ENCODE measurements at regions of chr11 and their contacts with region 1.

Region 1: DNA sequence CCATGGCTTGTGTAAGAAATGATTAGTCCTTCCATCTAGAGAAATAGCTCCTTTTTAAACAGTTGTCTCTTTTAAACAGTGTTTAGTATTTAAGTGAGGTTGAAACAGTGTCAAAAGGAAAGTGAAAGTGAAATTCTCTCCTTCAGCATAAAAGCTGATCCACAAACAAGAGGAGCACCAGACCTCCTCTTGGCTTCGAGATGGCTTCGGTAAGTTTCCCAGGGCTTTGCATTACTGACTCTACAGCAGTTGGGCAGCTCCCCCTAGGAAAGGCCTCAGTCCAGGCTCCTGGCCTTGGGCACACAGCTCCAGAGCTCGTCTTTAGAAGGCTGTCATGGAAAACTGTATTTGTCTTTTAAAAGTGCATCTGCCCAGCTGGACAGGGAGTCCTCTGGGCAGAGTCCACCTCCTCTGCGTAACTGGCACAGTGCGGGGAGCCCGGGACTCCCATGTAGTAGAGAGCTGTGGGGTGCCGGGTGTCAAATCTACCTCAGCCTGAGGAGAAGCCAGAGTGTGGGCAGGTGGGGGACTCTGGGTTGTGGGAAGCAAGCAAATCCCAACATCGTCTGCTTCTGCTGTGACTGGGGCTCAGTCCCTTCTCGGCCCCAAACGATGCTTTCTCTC is at the start of gene PLAAT4:
- DNase-seq: peak in 8 of 9 donors; percentile 30 to 64 (median 56)
- ATAC-seq: peak; percentile 74
- H3K4me3 ChIP-seq: peak within 1 kb of the TSS; percentile 90
- H3K4me3 Mint-ChIP-seq: peak within 1 kb of the TSS; percentile 87 to 99 (median 96)
- H3K27ac ChIP-seq: peak within 1 kb of the TSS; percentile 82
- H3K27ac Mint-ChIP-seq: peak within 1 kb of the TSS; percentile 91 to 97 (median 96)
- H3K4me1 ChIP-seq: peaks cover 79% of the 10 kb centered on the region in 2 donors
- H3K4me1 Mint-ChIP-seq: peaks cover 55 to 96% (median 87%) of the 10 kb centered on the region in 7 donors
- H3K27me3 ChIP-seq: no peaks in the 10 kb centered on the region
- H3K27me3 Mint-ChIP-seq: no peaks in the 10 kb centered on the region
- total RNA-seq, gene PLAAT4: 96.2 to 170 (median 122) TPM

Region 2: GRCh38 chr11:63490551-63491239 is 46.1 kb before region 1 on chr11 and contains the start of gene PLAAT5:
- CTCF ChIA-PET with region 1: no interaction called
- POLR2A ChIA-PET with region 1: interaction called, 19 read pairs
- intact Hi-C with region 1: no loop called
- DNase-seq: peak in 2 of 9 donors; percentile 8 to 15
- ATAC-seq: peak; percentile 73
- H3K4me3 ChIP-seq: peak within 1 kb of the TSS; percentile 41
- H3K4me3 Mint-ChIP-seq: peak within 1 kb of the TSS; percentile 77 to 88 (median 84)
- H3K27ac ChIP-seq: no peak within 1 kb of the TSS
- H3K27ac Mint-ChIP-seq: peak within 1 kb of the TSS in 1 of 9 donors; percentile 64
- H3K4me1 ChIP-seq: no peaks in the 10 kb centered on the region
- H3K4me1 Mint-ChIP-seq: peaks cover 8 to 19% (median 13%) of the 10 kb centered on the region in 7 donors
- H3K27me3 ChIP-seq: no peaks in the 10 kb centered on the region
- H3K27me3 Mint-ChIP-seq: peaks cover 25 to 80% (median 25%) of the 10 kb centered on the region in 5 donors
- total RNA-seq, gene PLAAT5: 1.1 TPM in 1 of 5 experiments, not detected in the others

Region 3: DNA sequence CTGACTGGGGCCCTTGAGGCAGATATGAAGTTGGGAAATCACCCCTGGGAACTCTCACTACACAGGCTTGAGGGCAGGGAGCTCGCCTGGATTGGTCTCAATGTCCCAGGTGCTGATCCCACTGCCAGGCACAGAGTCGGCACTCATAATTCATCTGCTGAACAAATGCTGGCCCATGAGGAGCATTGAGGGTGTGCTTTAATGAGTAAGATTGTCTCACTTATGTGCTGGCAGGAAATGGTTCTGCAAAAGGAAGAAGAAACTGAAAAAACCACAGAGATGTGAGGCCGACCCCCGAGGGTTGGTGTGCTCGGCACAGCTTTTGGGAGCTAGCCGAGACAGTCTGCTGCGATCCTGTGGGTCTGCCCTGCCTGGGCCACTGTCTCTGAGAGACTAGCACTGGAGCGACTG is 17.0 kb after region 1 on chr11:
- CTCF ChIA-PET with region 1: interaction called, 25 read pairs
- POLR2A ChIA-PET with region 1: interaction called, 172 read pairs
- intact Hi-C with region 1: loop called (anchors 1 kb)
- DNase-seq: peak in 7 of 9 donors; percentile 41 to 61 (median 53)
- ATAC-seq: peak; percentile 85
- H3K4me3 ChIP-seq: peak overlapping the region; percentile 51
- H3K4me3 Mint-ChIP-seq: peak overlapping the region; percentile 78 to 95 (median 88)
- H3K27ac ChIP-seq: peak overlapping the region; percentile 54
- H3K27ac Mint-ChIP-seq: peak overlapping the region; percentile 88 to 100 (median 96)
- H3K4me1 ChIP-seq: peaks cover 35 to 51% of the 10 kb centered on the region in 2 donors
- H3K4me1 Mint-ChIP-seq: peaks cover 33 to 81% (median 77%) of the 10 kb centered on the region in 7 donors
- H3K27me3 ChIP-seq: no peaks in the 10 kb centered on the region
- H3K27me3 Mint-ChIP-seq: no peaks in the 10 kb centered on the region

Region 4: GRCh38 chr11:63567044-63567840 is 30.5 kb after region 1 on chr11:
- CTCF ChIA-PET with region 1: no interaction called
- POLR2A ChIA-PET with region 1: interaction called, 5 read pairs
- intact Hi-C with region 1: loop called in 1 of 2 experiments (anchors 1 kb)
- DNase-seq: peak in 8 of 9 donors; percentile 31 to 84 (median 62)
- ATAC-seq: peak; percentile 88
- H3K4me3 ChIP-seq: no peak overlapping the region
- H3K4me3 Mint-ChIP-seq: peak overlapping the region in 9 of 10 donors; percentile 7 to 62 (median 42)
- H3K27ac ChIP-seq: peak overlapping the region; percentile 44
- H3K27ac Mint-ChIP-seq: peak overlapping the region; percentile 56 to 94 (median 86)
- H3K4me1 ChIP-seq: peaks cover 22 to 25% of the 10 kb centered on the region in 2 donors
- H3K4me1 Mint-ChIP-seq: peaks cover 26 to 55% (median 47%) of the 10 kb centered on the region in 7 donors
- H3K27me3 ChIP-seq: no peaks in the 10 kb centered on the region
- H3K27me3 Mint-ChIP-seq: peaks cover 0 to 19% (median 0%) of the 10 kb centered on the region in 5 donors

Region 5: GRCh38 chr11:63614136-63614664 is 77.4 kb after region 1 on chr11 and contains the start of gene PLAAT3:
- CTCF ChIA-PET with region 1: interaction called, 3 read pairs
- POLR2A ChIA-PET with region 1: interaction called, 3 read pairs
- intact Hi-C with region 1: loop called (anchors 2 to 5 kb)
- DNase-seq: peak in 7 of 9 donors; percentile 11 to 41 (median 16)
- ATAC-seq: peak; percentile 70
- H3K4me3 ChIP-seq: peak within 1 kb of the TSS; percentile 75
- H3K4me3 Mint-ChIP-seq: peak within 1 kb of the TSS; percentile 82 to 89 (median 86)
- H3K27ac ChIP-seq: peak within 1 kb of the TSS; percentile 35
- H3K27ac Mint-ChIP-seq: peak within 1 kb of the TSS in 8 of 9 donors; percentile 52 to 74 (median 62)
- H3K4me1 ChIP-seq: peaks cover 0 to 3% of the 10 kb centered on the region in 2 donors
- H3K4me1 Mint-ChIP-seq: peaks cover 0 to 26% (median 12%) of the 10 kb centered on the region in 7 donors
- H3K27me3 ChIP-seq: no peaks in the 10 kb centered on the region
- H3K27me3 Mint-ChIP-seq: peaks cover 0 to 31% (median 0%) of the 10 kb centered on the region in 5 donors
- total RNA-seq, gene PLAAT3: 0.92 to 10.3 (median 2.0) TPM